Colonic mucosa (tissue), 4 donors: ENCODE measurements at regions of chr4 and their contacts with region 1.

Region 1: DNA sequence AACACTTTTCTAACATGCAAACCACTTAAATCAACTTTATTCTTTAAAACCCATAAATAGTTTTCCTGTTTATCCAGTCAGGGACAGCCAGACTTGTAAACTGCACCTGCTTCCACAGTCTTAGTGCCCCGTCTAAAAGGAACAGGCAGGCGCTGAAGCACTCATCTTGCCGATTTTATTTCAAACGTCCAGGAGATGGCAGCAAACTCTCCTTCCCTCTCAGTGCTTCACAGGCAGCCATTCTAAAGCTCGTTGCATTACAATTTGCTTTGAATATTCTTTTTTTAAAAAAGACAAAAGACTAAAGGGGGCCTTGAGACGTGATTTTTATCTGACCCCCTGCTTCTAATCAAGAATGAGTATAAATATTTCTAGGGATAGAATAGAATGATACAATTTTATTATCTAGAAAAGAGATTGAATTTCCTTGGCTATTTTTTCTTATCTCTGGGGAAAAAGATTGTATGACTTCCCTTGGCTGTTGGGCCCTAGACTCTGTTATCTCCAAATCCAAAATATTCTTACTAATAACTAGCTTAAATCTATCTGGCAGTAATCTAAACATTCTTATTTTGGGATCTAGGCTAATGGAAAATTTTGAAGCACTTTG is 93.6 kb upstream of the MYOZ2 start:
- DNase-seq: peak; percentile 80
- H3K4me3 ChIP-seq: no peak overlapping the region
- H3K27ac ChIP-seq: no peak overlapping the region
- H3K4me1 ChIP-seq: no peaks in the 10 kb centered on the region
- H3K27me3 ChIP-seq: no peaks in the 10 kb centered on the region
- CTCF ChIP-seq: peak; percentile 61

Region 2: GRCh38 chr4:118823107-118823870 is 218.8 kb before region 1 on chr4:
- intact Hi-C with region 1: no loop called
- DNase-seq: peak; percentile 61
- H3K4me3 ChIP-seq: no peak overlapping the region
- H3K27ac ChIP-seq: no peak overlapping the region
- H3K4me1 ChIP-seq: no peaks in the 10 kb centered on the region
- H3K27me3 ChIP-seq: no peaks in the 10 kb centered on the region
- CTCF ChIP-seq: no peak

Region 3: DNA sequence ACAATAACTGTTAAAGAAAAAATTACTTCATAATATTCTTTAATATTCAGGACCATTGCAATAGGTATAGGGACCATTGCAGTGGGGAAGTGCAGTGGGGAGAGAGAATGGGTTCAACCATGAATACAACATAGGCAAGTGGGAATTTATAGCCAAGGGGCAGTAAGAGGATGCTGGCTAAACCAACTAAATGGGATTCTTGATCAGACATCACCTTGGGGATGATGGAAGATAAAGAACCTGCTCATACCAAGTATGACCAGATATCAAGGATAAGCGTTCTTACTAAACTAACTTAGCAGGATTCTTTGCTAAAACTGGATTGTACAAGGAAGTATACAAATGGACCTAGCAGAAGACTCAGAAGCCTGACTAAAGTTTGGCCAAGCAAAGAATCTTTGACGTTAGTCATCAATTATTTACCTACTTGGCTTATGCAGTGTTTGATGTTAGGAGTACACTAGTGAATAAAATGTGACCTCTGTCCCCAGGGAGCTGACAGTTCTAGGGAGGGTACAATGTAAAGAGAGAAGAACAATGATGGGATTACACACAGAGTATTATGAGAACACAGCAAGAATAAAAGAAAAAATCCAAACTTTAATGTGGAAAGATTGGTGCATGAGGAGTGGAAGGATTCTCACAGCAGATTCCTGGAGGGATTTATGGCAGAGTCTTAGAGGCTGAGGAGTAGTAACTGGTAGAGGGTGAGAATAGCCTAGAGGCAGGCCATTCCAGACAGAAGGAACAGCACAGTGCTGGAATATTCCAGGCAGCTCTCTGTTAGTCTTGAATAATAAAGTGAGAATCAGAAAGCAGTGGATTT is 38.9 kb after region 1 on chr4:
- intact Hi-C with region 1: no loop called
- DNase-seq: peak; percentile 58
- H3K4me3 ChIP-seq: no peak overlapping the region
- H3K27ac ChIP-seq: peak overlapping the region; percentile 88
- H3K4me1 ChIP-seq: peaks cover 5% of the 10 kb centered on the region
- H3K27me3 ChIP-seq: no peaks in the 10 kb centered on the region
- CTCF ChIP-seq: no peak

Region 4: DNA sequence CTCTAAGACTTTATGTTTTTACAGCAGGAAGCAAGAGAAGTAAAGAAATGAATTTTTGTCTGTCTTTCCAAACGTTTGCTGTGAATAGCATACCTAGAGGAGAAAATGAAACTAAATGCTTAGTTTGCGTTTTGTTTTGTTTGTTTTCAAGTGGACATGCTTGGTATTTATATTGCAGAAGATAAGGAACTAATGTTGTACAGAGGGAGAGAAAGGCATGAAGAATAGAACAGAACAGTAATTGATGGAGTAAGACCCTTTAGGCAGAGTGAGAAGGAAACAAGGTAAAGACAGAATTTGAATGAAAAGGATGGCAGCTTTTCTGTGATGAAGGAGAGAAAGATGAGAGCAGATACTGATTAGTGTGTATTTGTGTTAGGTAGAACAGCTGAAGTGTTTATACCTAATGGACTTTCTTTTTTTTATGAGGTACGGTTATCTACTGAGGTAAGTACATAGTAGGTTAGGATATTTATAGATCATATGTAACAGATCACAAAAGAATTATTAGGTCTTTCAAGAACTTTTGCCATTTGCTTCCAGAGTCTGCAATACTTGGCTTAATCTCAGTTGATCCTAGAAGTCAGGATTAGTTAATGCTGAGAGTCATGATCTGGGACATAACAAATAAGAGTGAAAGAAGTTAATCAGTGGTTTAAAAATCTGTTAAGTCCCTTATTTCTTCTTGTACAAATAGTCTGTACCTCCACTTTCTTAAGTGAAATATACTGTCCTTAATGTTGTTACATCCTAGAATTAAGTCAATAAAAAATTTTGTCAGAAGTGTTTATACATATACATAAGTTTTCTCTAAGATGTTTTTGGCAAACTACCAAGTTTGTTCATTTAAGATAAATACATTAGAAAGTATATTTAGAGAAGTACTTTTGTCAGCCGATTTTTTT is 243.1 kb after region 1 on chr4:
- intact Hi-C with region 1: loop called (anchors 5 kb)
- DNase-seq: no peak
- H3K4me3 ChIP-seq: no peak overlapping the region
- H3K27ac ChIP-seq: peak overlapping the region; percentile 13
- H3K4me1 ChIP-seq: peaks cover 3% of the 10 kb centered on the region
- H3K27me3 ChIP-seq: no peaks in the 10 kb centered on the region
- CTCF ChIP-seq: no peak